PC-3 (cell line): ENCODE measurements at regions of chr5 and their contacts with region 1.

Region 1: GRCh38 chr5:153964880-153965645 is 73.6 kb downstream of the FAM114A2 start:
- DNase-seq: peak; percentile 64
- ATAC-seq: peak; percentile 75
- H3K4me3 ChIP-seq: no peak overlapping the region
- H3K27ac ChIP-seq: no peak overlapping the region
- H3K4me1 ChIP-seq: no peaks in the 10 kb centered on the region
- H3K27me3 ChIP-seq: 0 out of 2 replicates have a peak, but pooled peaks cover under 1% of the 10 kb centered on the region
- CTCF ChIP-seq: peak; percentile 88

Region 2: GRCh38 chr5:152514827-152515397 is 1450.2 kb before region 1 on chr5:
- CTCF ChIA-PET with region 1: interaction called, 11 read pairs
- POLR2A ChIA-PET with region 1: no interaction called
- intact Hi-C with region 1: no loop called
- DNase-seq: peak; percentile 53
- ATAC-seq: peak; percentile 38
- H3K4me3 ChIP-seq: no peak overlapping the region
- H3K27ac ChIP-seq: no peak overlapping the region
- H3K4me1 ChIP-seq: no peaks in the 10 kb centered on the region
- H3K27me3 ChIP-seq: peaks cover 12% of the 10 kb centered on the region; the same call in 1 of the 2 replicates
- CTCF ChIP-seq: peak; percentile 76

Region 3: DNA sequence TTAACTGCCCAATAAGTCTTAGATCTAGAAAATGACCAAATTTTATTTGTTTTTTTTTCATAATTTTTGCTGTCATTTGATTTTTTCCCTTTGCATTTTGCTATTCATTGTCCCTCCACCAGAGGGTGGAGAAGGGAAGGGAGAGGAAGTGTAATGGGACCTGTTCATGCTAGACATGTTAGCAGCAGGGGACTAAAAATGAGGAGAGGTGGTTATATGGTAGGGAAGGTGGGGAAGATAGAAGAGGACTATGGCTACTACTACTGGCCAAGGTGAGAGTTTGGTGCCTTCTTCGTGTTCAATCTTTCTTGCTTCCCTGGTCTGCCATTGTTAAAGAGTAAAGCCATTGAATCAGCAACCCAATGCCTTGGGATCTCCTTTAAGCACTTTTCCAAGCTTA is 468.2 kb before region 1 on chr5:
- CTCF ChIA-PET with region 1: no interaction called
- POLR2A ChIA-PET with region 1: no interaction called
- intact Hi-C with region 1: loop called (anchors 2 kb)
- DNase-seq: peak; percentile 57
- ATAC-seq: peak; percentile 56; the same call in 1 of the 2 replicates
- H3K4me3 ChIP-seq: no peak overlapping the region
- H3K27ac ChIP-seq: no peak overlapping the region
- H3K4me1 ChIP-seq: no peaks in the 10 kb centered on the region
- H3K27me3 ChIP-seq: peaks cover 6% of the 10 kb centered on the region
- CTCF ChIP-seq: peak; percentile 81